ENCODE measurements at regions of chrX and their contacts with region 1.

Region 1: GRCh38 chrX:110450050-110450449 is 91.4 kb downstream of the RTL9 start:
- DNase-seq: peak; percentile 44 to 78 (median 73)
- H3K4me3 ChIP-seq: no peak overlapping the region
- H3K27ac ChIP-seq: no peak overlapping the region
- H3K4me1 ChIP-seq: no peaks in the 10 kb centered on the region
- H3K27me3 ChIP-seq: no peaks in the 10 kb centered on the region
- CTCF ChIP-seq: peak; percentile 27 to 39 (median 39)
- EP300 ChIP-seq: no peak
- POLR2A ChIP-seq: no peak

Region 2: GRCh38 chrX:110703641-110704040 is 253.6 kb after region 1 on chrX:
- intact Hi-C with region 1: no loop called
- DNase-seq: no peak
- H3K4me3 ChIP-seq: no peak overlapping the region
- H3K27ac ChIP-seq: no peak overlapping the region
- H3K4me1 ChIP-seq: no peaks in the 10 kb centered on the region
- H3K27me3 ChIP-seq: no peaks in the 10 kb centered on the region
- CTCF ChIP-seq: no peak
- EP300 ChIP-seq: no peak
- POLR2A ChIP-seq: no peak

Region 3: DNA sequence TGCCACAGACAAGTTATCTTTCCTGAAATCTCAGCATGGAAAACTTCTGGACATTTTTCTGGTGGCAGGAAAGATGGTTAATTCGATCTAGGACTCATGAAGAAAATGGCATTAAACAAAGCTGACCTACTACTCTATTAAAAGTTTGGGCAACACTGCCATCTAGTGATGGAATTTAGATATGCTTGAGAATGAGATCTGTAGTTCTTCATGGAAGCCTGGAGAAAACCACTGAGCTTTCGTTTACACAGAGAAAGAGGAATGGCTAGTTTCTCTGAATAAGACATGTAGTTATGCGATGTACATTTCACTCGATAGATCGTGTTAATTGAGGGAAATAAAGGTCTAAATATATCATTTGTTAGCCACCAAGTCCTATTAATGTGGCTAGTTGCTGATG is 397.3 kb after region 1 on chrX:
- intact Hi-C with region 1: loop called (anchors 5 to 10 kb)
- DNase-seq: no peak
- H3K4me3 ChIP-seq: no peak overlapping the region
- H3K27ac ChIP-seq: no peak overlapping the region
- H3K4me1 ChIP-seq: no peaks in the 10 kb centered on the region
- H3K27me3 ChIP-seq: no peaks in the 10 kb centered on the region
- CTCF ChIP-seq: peak in 2 of 3 donors; percentile 38 to 40
- EP300 ChIP-seq: no peak
- POLR2A ChIP-seq: no peak

Region 4: GRCh38 chrX:110853610-110854009 is 403.6 kb after region 1 on chrX:
- intact Hi-C with region 1: loop called (anchors 5 to 10 kb)
- DNase-seq: no peak
- H3K4me3 ChIP-seq: no peak overlapping the region
- H3K27ac ChIP-seq: no peak overlapping the region
- H3K4me1 ChIP-seq: no peaks in the 10 kb centered on the region
- H3K27me3 ChIP-seq: no peaks in the 10 kb centered on the region
- CTCF ChIP-seq: no peak
- EP300 ChIP-seq: no peak
- POLR2A ChIP-seq: no peak

Region 5: GRCh38 chrX:110920991-110921390 is 470.9 kb after region 1 on chrX:
- intact Hi-C with region 1: no loop called
- DNase-seq: no peak
- H3K4me3 ChIP-seq: no peak overlapping the region
- H3K27ac ChIP-seq: no peak overlapping the region
- H3K4me1 ChIP-seq: no peaks in the 10 kb centered on the region
- H3K27me3 ChIP-seq: no peaks in the 10 kb centered on the region
- CTCF ChIP-seq: no peak
- EP300 ChIP-seq: no peak
- POLR2A ChIP-seq: no peak